Endothelial cell of umbilical vein (primary cell): ENCODE measurements at regions of chr2 and their contacts with region 1.

Region 1: GRCh38 chr2:170815746-170816503 is 762 bp upstream of the GAD1 start:
- DNase-seq: peak; percentile 31
- H3K4me3 ChIP-seq: no peak overlapping the region
- H3K27ac ChIP-seq: no peak overlapping the region
- H3K4me1 ChIP-seq: peaks cover 16% of the 10 kb centered on the region
- H3K27me3 ChIP-seq: peaks cover 62 to 72% of the 10 kb centered on the region in 2 experiments
- CTCF ChIP-seq: peak; percentile 72 to 82
- POLR2A ChIP-seq: no peak

Region 2: DNA sequence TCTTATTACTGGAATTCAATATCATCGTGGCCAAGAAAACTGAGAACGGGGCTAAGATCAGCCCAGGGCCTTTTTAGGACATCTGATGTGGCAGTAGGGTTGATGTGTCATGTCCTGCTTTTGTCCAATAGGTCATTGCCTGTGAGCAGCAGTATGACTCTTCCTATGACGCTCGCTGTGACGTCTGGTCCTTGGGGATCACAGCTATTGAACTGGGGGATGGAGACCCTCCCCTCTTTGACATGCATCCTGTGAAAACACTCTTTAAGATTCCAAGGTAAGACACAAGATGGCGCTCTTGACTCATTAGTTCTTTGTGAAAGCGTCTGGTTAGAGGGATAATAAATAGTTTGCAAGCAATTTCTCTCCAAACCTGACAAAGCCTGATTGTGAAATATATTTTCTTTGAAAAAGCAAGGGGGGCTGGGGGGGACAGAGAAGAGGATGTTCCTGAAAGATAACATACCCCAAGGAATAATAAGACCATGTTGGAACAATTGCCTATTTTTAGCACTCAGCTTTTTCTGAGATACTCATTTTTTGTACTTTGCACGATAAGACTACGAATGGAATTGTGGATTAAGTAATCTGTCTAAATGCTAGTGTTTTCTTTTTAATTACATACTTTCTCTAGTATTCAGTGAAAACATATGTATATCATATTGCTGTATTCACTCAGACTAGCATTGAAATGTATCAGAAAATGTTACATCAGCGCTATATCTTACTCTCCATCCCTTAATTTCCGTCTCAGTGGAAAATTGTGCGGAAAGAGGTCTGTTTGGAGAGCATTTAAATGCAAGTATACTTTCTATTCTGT is 579.9 kb before region 1 on chr2:
- CTCF ChIA-PET with region 1: interaction called, 37 read pairs
- POLR2A ChIA-PET with region 1: no interaction called
- dilution Hi-C with region 1: no loop called
- intact Hi-C with region 1: loop called (anchors 1 kb)
- DNase-seq: peak; percentile 72
- H3K4me3 ChIP-seq: no peak overlapping the region
- H3K27ac ChIP-seq: no peak overlapping the region
- H3K4me1 ChIP-seq: no peaks in the 10 kb centered on the region
- H3K27me3 ChIP-seq: peaks cover 11 to 27% of the 10 kb centered on the region in 2 experiments
- CTCF ChIP-seq: peak; percentile 38 to 45
- POLR2A ChIP-seq: no peak

Region 3: DNA sequence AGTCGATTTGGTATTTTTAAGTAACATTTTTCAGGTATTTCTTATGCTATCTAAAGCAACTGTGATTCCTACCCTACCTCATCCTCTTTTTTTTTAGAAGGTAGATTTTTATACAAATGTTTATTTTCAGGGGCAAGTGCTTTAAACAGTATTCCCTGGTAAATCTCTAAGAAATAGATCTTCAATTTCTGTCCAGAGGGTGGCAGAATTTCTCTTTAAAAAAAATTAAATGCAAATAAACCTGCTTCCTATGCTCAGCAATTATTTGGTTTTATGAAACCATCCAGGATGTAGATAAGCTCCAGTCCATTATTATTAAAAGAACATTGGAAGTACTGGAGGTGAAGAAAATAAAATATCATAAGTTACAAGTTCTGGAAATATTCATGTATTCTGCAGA is 446.0 kb before region 1 on chr2:
- CTCF ChIA-PET with region 1: interaction called, 118 read pairs
- POLR2A ChIA-PET with region 1: no interaction called
- dilution Hi-C with region 1: no loop called
- intact Hi-C with region 1: loop called (anchors 1 kb)
- DNase-seq: peak; percentile 42
- H3K4me3 ChIP-seq: no peak overlapping the region
- H3K27ac ChIP-seq: no peak overlapping the region
- H3K4me1 ChIP-seq: no peaks in the 10 kb centered on the region
- H3K27me3 ChIP-seq: peaks cover 45 to 58% of the 10 kb centered on the region in 2 experiments
- CTCF ChIP-seq: no peak
- POLR2A ChIP-seq: no peak

Region 4: DNA sequence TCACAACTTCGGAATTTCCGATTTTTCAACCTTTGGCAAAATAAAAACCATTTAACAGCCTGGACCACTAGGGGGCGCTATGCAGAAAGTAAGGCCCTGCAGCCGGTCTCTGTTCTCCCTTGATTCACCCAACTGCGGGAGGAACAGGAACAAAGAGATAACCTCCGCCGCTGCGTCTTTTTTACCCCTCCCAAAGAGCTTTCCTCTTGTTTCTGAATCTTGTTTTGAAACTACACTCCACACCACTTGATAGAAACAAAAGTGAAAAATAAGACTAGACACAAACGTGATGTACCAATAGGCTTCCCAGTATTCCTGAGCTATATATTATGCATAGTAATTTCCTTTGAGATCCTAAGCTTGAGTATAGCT is 406.8 kb before region 1 on chr2:
- CTCF ChIA-PET with region 1: interaction called, 115 read pairs
- POLR2A ChIA-PET with region 1: no interaction called
- dilution Hi-C with region 1: no loop called
- intact Hi-C with region 1: loop called (anchors 1 kb)
- DNase-seq: peak; percentile 70
- H3K4me3 ChIP-seq: no peak overlapping the region
- H3K27ac ChIP-seq: no peak overlapping the region
- H3K4me1 ChIP-seq: peaks cover 3% of the 10 kb centered on the region
- H3K27me3 ChIP-seq: peaks cover 10 to 30% of the 10 kb centered on the region in 2 experiments
- CTCF ChIP-seq: peak; percentile 77 to 89
- POLR2A ChIP-seq: no peak

Region 5: GRCh38 chr2:170715062-170715931 is 100.6 kb before region 1 on chr2 and contains the start of gene SP5:
- CTCF ChIA-PET with region 1: no interaction called
- POLR2A ChIA-PET with region 1: no interaction called
- dilution Hi-C with region 1: no loop called
- intact Hi-C with region 1: loop called (anchors 2 kb)
- DNase-seq: peak; percentile 49
- H3K4me3 ChIP-seq: peak within 1 kb of the TSS; percentile 17 to 63 (median 30)
- H3K27ac ChIP-seq: no peak within 1 kb of the TSS
- H3K4me1 ChIP-seq: peaks cover 19% of the 10 kb centered on the region
- H3K27me3 ChIP-seq: peaks cover 67 to 97% of the 10 kb centered on the region in 2 experiments
- CTCF ChIP-seq: no peak
- POLR2A ChIP-seq: no peak
- total RNA-seq, gene SP5: not detected in 2 replicates

Region 6: DNA sequence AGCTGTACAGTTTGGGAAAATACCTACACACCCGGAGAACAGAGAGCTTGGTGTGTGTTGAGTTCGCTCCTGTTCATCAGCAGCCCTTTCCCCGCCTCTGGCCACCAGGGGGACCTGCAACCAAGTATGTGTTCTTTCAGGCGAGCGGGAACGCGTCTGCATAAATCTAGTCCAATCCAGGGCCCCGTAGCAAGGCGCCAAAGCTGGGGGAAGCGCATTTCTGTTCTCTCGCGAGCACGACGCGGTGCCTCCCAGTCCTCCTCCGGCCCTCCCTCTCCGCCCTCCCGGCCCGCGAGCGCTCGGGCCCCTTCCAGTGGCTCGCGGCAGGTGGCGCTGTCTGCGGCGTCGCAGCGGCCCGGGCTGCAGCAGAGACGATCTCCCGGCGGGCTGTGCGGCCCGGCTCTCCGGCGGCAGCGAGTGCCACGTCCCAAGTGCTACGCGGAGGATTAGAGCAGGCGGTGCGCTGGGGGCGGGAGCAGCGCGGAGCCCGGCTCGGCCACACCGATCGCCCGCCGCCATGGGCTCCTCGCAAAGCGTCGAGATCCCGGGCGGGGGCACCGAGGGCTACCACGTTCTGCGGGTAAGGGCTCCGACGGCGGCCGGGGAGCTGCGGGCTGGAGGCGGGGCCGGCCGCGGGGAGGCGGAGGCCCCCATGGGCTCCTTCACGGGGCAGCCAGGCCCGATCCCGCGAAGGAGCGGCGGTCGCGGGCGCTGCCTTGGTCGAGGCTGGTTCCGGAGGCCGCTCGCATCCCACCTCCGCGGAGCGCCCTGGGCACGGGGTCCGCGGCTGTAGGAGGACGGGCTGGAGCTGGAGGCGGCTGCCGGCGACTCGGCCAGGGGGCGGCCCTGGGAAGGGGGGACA is 113.1 kb after region 1 on chr2 and contains the start of gene GORASP2:
- CTCF ChIA-PET with region 1: no interaction called
- POLR2A ChIA-PET with region 1: no interaction called
- dilution Hi-C with region 1: no loop called
- intact Hi-C with region 1: no loop called
- DNase-seq: peak; percentile 99
- H3K4me3 ChIP-seq: peak within 1 kb of the TSS; percentile 80 to 98 (median 91)
- H3K27ac ChIP-seq: peak within 1 kb of the TSS; percentile 70
- H3K4me1 ChIP-seq: peaks cover 16% of the 10 kb centered on the region
- H3K27me3 ChIP-seq: no peaks in the 10 kb centered on the region
- CTCF ChIP-seq: peak; percentile 88 to 99
- POLR2A ChIP-seq: peak; percentile 92
- total RNA-seq, gene GORASP2: 93.7 and 104 TPM in 2 replicates